ENCODE measurements at regions of chr9 and their contacts with region 1.

Region 1: DNA sequence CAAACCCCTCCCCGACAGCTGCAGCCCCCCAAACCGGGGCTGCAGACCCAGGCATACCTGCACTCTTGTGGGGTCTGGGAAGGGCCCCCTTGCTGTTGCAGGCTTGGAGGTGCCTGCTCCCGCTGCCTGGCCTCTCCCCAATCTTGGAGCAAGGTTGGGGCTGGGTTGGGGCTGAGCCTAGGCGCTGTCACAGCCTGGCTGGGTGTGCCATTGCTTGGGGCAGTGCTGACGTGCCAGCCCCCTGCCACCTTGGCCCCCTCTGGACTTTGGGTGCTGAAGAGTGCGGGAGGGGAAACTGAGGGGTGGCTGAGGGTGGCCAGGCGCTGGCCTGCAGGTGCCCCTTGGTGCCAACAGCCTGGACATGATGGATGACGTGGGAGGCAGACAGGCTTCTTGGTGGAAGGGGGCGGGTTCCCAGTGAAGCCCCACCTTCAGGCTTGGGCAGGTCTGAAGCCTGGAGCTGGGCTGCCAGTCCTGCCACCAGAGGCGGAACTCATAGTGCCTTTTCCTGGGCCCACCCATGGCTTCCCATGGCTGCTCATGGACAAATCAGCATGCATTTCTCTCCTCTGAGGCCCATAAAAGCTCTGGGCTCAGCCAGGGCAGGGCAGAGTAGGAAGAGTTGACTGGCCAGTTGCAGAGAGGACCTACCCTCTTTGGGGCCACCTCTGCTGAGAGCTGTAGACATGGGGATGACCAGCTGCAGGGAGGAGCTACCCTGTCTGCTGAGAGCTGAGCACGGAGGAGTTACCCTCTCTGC is 19.1 kb downstream of the TMEM38B start:
- DNase-seq: no peak
- H3K4me3 ChIP-seq: no peak overlapping the region
- H3K27ac ChIP-seq: no peak overlapping the region
- H3K4me1 ChIP-seq: no peaks in the 10 kb centered on the region
- H3K27me3 ChIP-seq: no peaks in the 10 kb centered on the region
- CTCF ChIP-seq: no peak

Region 2: GRCh38 chr9:105737205-105737604 is 23.8 kb after region 1 on chr9:
- CTCF ChIA-PET with region 1: no interaction called
- POLR2A ChIA-PET with region 1: interaction called, 14 read pairs
- intact Hi-C with region 1: no loop called
- DNase-seq: no peak
- H3K4me3 ChIP-seq: no peak overlapping the region
- H3K27ac ChIP-seq: no peak overlapping the region
- H3K4me1 ChIP-seq: no peaks in the 10 kb centered on the region
- H3K27me3 ChIP-seq: no peaks in the 10 kb centered on the region
- CTCF ChIP-seq: no peak

Region 3: DNA sequence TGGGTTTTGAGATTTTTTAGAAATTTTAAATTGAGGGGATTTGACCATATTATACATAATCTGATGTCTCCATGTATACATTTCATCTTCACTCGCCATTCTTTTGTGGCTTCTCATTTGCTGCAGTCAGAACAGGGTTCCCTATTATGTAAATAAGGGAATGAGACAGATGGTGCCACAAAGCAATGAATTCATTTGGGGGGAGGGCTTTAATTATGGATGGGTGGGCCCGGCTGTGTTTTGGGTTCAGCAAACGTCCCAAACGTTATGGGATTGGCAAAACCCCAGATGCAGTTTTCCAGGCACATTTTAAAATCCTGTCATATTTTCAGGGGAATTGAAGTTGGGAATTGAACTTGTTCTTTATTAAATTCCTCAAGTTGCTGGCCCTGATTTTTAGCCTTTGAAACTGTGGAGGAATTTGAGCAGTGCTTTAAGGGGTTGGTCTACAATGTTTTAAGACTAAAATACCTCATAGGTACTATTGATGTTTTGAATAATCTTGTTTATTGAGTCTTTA is 591.0 kb after region 1 on chr9:
- CTCF ChIA-PET with region 1: no interaction called
- POLR2A ChIA-PET with region 1: no interaction called
- intact Hi-C with region 1: no loop called
- DNase-seq: no peak
- H3K4me3 ChIP-seq: no peak overlapping the region
- H3K27ac ChIP-seq: no peak overlapping the region
- H3K4me1 ChIP-seq: no peaks in the 10 kb centered on the region
- H3K27me3 ChIP-seq: no peaks in the 10 kb centered on the region
- CTCF ChIP-seq: no peak

Measured in A673 (cell line).